CD14-positive monocyte (primary cell): ENCODE measurements at regions of chr12 and their contacts with region 1.

Region 1: GRCh38 chr12:57078519-57079404 is at the start of gene NEMP1:
- DNase-seq: peak; percentile 100
- H3K4me3 ChIP-seq: peak within 1 kb of the TSS; percentile 64 to 90 (median 83)
- H3K4me3 Mint-ChIP-seq: peak within 1 kb of the TSS; percentile 95
- H3K27ac ChIP-seq: peak within 1 kb of the TSS; percentile 31 to 80
- H3K27ac Mint-ChIP-seq: peak within 1 kb of the TSS; percentile 87 to 94 (median 92)
- H3K4me1 ChIP-seq: peaks cover 16 to 21% of the 10 kb centered on the region in 2 donors
- H3K4me1 Mint-ChIP-seq: peaks cover 23% of the 10 kb centered on the region
- H3K27me3 ChIP-seq: no peaks in the 10 kb centered on the region
- H3K27me3 Mint-ChIP-seq: no peaks in the 10 kb centered on the region
- CTCF ChIP-seq: no peak
- polyA plus RNA-seq, gene NEMP1: 1.9 to 4.6 (median 2.2) TPM

Region 2: DNA sequence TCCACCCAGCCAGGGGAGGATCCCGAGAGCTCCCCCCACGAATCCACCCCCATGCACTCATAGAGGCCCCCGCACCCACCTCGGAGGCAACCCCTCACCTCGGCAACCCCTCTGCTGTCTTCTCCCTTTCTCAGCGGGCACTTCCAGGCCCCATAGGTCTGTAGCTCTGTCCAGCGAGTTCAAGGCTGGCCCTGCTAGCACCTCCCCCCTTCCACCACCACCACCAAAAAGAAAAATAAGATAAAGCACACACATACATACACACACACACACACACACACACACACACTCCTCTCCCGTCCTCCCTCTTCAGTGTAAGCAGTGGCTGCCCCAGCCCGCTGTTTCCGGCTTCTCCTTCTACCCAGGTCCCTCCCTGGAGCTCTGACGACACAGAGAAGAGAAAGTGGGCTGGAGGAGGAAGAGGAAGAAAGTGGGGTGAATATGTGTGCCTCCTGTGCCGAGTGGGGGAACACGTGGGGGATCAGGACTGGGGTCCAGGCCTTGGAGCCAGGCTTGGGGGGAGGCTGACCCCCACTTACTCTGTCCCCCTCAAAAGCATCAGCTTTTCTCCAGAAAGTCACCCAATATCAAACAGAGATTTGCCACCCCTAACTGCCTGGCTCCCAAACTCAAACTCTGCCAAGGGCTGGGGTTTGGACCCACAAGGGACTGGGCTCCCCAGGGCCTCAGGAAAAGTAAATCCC is 32.4 kb after region 1 on chr12 and contains the start of gene STAT6:
- intact Hi-C with region 1: loop called (anchors 5 kb)
- DNase-seq: peak; percentile 90 to 91 (median 90)
- H3K4me3 ChIP-seq: peak within 1 kb of the TSS; percentile 69 to 100 (median 75)
- H3K4me3 Mint-ChIP-seq: peak within 1 kb of the TSS; percentile 98 to 99
- H3K27ac ChIP-seq: peak within 1 kb of the TSS; percentile 100
- H3K27ac Mint-ChIP-seq: peak within 1 kb of the TSS; percentile 95 to 100 (median 99)
- H3K4me1 ChIP-seq: peaks cover 39 to 59% of the 10 kb centered on the region in 2 donors
- H3K4me1 Mint-ChIP-seq: peaks cover 56% of the 10 kb centered on the region
- H3K27me3 ChIP-seq: no peaks in the 10 kb centered on the region
- H3K27me3 Mint-ChIP-seq: peaks cover 0 to 5% (median 2%) of the 10 kb centered on the region in 3 donors
- CTCF ChIP-seq: no peak
- polyA plus RNA-seq, gene STAT6: 132 to 637 (median 154) TPM